ENCODE measurements at regions of chr15 and their contacts with region 1.

Region 1: GRCh38 chr15:57340682-57341259 is 35.5 kb upstream of the CGNL1 start:
- DNase-seq: peak; percentile 70
- ATAC-seq: peak; percentile 67
- H3K4me3 ChIP-seq: no peak overlapping the region
- H3K4me3 Mint-ChIP-seq: no peak overlapping the region
- H3K27ac ChIP-seq: no peak overlapping the region
- H3K27ac Mint-ChIP-seq: no peak overlapping the region
- H3K4me1 ChIP-seq: no peaks in the 10 kb centered on the region
- H3K4me1 Mint-ChIP-seq: no peaks in the 10 kb centered on the region
- H3K27me3 ChIP-seq: no peaks in the 10 kb centered on the region
- H3K27me3 Mint-ChIP-seq: peaks cover 12% of the 10 kb centered on the region
- CTCF ChIP-seq: peak; percentile 96

Region 2: DNA sequence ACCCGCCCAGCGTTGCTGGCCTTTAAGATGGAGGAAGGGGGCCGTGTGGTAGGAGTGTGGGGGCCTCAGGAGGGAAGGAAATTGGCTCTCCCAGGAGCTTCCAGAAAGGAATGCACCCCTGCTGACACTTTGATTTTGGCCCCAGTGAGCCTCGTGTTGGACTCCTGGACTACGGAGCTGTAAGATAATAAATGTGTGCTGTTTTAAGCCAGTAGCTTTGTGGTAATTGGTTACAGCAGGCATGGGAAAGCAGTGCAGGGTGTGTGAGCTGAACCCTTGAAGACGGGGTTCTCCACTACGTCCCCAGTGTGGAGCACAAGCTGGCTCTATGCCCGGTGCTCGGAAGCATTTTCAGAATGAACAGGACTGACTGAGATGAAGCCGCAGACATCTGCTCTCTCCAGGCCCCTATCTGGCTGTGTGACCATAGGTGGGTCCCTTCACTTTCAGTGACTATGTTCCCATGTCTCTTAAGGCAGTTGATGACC is 12.6 kb after region 1 on chr15:
- CTCF ChIA-PET with region 1: interaction called, 12 read pairs
- POLR2A ChIA-PET with region 1: no interaction called
- intact Hi-C with region 1: no loop called
- DNase-seq: no peak
- ATAC-seq: no peak
- H3K4me3 ChIP-seq: no peak overlapping the region
- H3K4me3 Mint-ChIP-seq: no peak overlapping the region
- H3K27ac ChIP-seq: no peak overlapping the region
- H3K27ac Mint-ChIP-seq: no peak overlapping the region
- H3K4me1 ChIP-seq: no peaks in the 10 kb centered on the region
- H3K4me1 Mint-ChIP-seq: no peaks in the 10 kb centered on the region
- H3K27me3 ChIP-seq: no peaks in the 10 kb centered on the region
- H3K27me3 Mint-ChIP-seq: peaks cover 9% of the 10 kb centered on the region
- CTCF ChIP-seq: no peak

Region 3: DNA sequence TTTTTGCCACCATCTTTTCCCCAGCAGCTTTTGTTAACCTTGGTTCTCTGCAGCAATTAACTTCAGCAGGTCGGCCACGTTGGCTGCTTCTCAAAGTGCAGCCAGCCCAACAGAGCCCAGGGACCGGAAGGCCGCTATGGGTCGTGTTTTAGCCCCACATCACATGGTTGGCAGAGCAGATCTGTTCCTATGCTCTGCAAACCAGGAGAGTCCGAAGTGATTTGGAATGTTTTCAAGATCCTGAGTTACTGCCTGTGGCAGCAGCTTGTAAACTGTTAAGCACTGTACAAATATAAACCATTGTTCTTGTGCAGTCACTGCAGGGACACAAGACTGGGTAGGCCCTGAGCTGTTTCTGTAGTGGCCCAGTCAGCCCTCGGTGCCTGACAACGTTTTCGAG is 181.4 kb after region 1 on chr15:
- CTCF ChIA-PET with region 1: interaction called, 288 read pairs
- POLR2A ChIA-PET with region 1: no interaction called
- intact Hi-C with region 1: loop called (anchors 1 kb)
- DNase-seq: no peak
- ATAC-seq: no peak
- H3K4me3 ChIP-seq: no peak overlapping the region
- H3K4me3 Mint-ChIP-seq: no peak overlapping the region
- H3K27ac ChIP-seq: no peak overlapping the region
- H3K27ac Mint-ChIP-seq: no peak overlapping the region
- H3K4me1 ChIP-seq: peaks cover 3 to 7% of the 10 kb centered on the region in 2 donors
- H3K4me1 Mint-ChIP-seq: peaks cover 9% of the 10 kb centered on the region
- H3K27me3 ChIP-seq: no peaks in the 10 kb centered on the region
- H3K27me3 Mint-ChIP-seq: no peaks in the 10 kb centered on the region
- CTCF ChIP-seq: no peak

Region 4: GRCh38 chr15:57541805-57542504 is 201.2 kb after region 1 on chr15:
- CTCF ChIA-PET with region 1: interaction called, 70 read pairs
- POLR2A ChIA-PET with region 1: no interaction called
- intact Hi-C with region 1: no loop called
- DNase-seq: peak; percentile 58
- ATAC-seq: no peak
- H3K4me3 ChIP-seq: no peak overlapping the region
- H3K4me3 Mint-ChIP-seq: no peak overlapping the region
- H3K27ac ChIP-seq: no peak overlapping the region
- H3K27ac Mint-ChIP-seq: no peak overlapping the region
- H3K4me1 ChIP-seq: no peaks in the 10 kb centered on the region
- H3K4me1 Mint-ChIP-seq: no peaks in the 10 kb centered on the region
- H3K27me3 ChIP-seq: peaks cover 0 to 5% (median 0%) of the 10 kb centered on the region in 4 experiments
- H3K27me3 Mint-ChIP-seq: peaks cover 41% of the 10 kb centered on the region
- CTCF ChIP-seq: peak; percentile 79

Region 5: GRCh38 chr15:57667171-57667849 is 326.5 kb after region 1 on chr15:
- CTCF ChIA-PET with region 1: no interaction called
- POLR2A ChIA-PET with region 1: no interaction called
- intact Hi-C with region 1: no loop called
- DNase-seq: no peak
- ATAC-seq: no peak
- H3K4me3 ChIP-seq: no peak overlapping the region
- H3K4me3 Mint-ChIP-seq: no peak overlapping the region
- H3K27ac ChIP-seq: no peak overlapping the region
- H3K27ac Mint-ChIP-seq: no peak overlapping the region
- H3K4me1 ChIP-seq: no peaks in the 10 kb centered on the region
- H3K4me1 Mint-ChIP-seq: no peaks in the 10 kb centered on the region
- H3K27me3 ChIP-seq: no peaks in the 10 kb centered on the region
- H3K27me3 Mint-ChIP-seq: peaks cover 36% of the 10 kb centered on the region
- CTCF ChIP-seq: no peak

Measured in B cell (primary cell).